BJ (cell line): ENCODE measurements at regions of chr2 and their contacts with region 1.

Region 1: DNA sequence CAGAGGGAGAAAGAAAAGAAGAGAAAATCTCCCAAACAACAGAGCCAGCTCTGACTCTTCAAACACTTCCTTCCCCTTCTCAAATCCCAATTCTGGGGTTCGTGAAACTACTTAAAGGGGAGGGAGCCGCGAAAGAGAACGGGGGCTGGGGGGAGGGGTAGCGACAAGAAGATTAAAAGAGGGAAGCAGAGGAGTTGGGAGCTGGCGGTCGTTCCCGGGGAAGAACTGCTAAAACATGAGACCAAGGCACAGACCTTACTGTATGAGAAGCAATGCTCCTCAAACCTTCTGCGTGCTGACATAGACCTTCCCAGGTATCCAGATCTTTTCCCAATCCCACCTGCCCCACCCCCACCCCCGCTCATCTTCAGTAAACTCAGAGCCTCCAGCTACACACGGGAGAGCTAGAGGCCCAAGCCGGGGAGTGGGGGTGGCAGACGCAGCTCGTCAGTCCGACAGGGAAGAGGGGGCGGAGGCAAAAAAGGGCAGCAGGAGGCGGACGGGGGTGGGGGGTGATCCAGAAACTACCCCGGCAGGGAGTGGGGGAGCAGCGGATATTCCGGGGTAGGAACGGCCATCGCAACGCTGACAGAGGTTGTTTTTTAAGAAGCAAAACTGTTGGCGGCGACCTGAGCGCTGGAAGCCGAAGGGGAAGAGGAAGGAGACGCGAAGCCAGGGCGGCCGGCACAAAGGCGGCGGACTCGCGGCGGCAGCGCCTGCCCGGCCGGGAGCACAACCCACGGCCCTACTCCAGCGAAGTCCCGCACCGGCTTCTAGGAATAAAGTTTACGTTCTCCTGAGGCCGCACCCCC is 1.0 kb downstream of the BAZ2B start:
- DNase-seq: peak; percentile 59
- H3K4me3 ChIP-seq: peak overlapping the region; percentile 93
- H3K27me3 ChIP-seq: no peaks in the 10 kb centered on the region
- CTCF ChIP-seq: no peak

Region 2: GRCh38 chr2:159083566-159084202 is 531.7 kb before region 1 on chr2:
- CTCF ChIA-PET with region 1: no interaction called
- POLR2A ChIA-PET with region 1: interaction called, 10 read pairs
- DNase-seq: peak; percentile 59
- H3K4me3 ChIP-seq: no peak overlapping the region
- H3K27me3 ChIP-seq: no peaks in the 10 kb centered on the region
- CTCF ChIP-seq: no peak

Region 3: DNA sequence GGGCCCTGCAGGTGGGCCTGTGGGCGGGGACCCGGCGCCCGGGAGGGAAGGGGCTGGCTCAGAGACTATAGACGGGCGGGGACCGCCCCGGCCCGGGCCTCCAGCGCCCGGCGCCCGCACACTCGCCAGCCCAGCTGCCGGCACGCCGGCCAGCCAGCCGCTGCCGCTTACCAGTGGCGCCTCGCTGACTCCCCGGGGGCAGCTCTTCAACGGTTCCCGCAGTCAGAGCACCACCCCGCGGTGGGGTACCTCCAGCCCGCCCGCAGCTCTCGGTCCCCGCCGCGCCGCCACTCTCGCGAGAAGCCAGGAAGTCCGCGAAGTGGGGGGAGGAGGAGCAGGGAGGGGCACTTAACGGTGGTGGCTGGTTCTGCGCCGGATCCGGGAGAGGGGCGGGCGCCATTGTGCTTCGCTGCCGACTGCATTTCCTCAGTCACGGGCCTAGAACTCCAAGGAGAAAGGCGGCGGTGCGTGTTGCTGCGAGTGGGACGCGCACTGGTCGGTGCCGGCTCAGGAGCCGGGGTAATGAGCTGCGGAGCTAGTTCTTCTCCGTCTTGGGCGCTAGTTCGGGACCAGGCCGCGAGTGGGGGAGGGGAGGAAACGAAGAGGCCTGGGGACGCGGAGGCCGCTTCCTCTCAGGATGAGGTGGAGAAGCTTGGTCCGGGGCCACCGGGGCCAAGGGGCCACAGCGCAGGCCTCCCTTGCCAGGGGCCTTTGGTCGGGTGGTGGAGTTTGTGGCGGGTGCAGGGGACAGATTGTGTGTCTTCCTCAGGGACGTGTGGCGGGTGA is 97.0 kb after region 1 on chr2 and contains the start of gene MARCHF7:
- CTCF ChIA-PET with region 1: interaction called, 4 read pairs
- POLR2A ChIA-PET with region 1: interaction called, 16 read pairs
- DNase-seq: peak; percentile 63
- H3K4me3 ChIP-seq: peak within 1 kb of the TSS; percentile 87
- H3K27me3 ChIP-seq: no peaks in the 10 kb centered on the region
- CTCF ChIP-seq: peak; percentile 68
- polyA plus RNA-seq, gene MARCHF7: 24.5 and 40.9 TPM in 2 replicates

Region 4: DNA sequence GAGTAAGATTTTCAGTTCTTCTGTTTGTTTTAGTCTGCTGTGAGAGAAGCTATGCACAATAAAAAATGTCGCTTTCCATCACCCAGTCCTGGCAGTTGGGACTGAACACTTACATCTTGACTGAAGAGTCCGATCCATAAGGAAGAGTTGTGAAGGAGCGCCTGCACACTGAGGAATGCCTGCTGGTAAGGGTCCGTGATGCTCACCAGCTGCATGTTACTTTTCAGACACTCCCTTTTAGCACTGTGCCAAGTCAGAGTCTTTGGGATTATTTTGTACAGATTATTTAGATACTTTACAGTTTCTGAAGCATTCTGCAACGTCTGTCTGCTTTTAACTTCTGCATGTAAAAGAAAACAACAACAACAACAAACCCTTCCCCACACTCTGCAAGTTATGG is 225.3 kb after region 1 on chr2:
- CTCF ChIA-PET with region 1: no interaction called
- POLR2A ChIA-PET with region 1: interaction called, 18 read pairs
- DNase-seq: no peak
- H3K4me3 ChIP-seq: no peak overlapping the region
- H3K27me3 ChIP-seq: no peaks in the 10 kb centered on the region
- CTCF ChIP-seq: no peak